Activated naive CD4-positive, alpha-beta T cell treated with anti-CD3 and anti-CD28 coated beads for 36 hours (primary cell): ENCODE measurements at regions of chr19 and their contacts with region 1.

Region 1: GRCh38 chr19:55516878-55517620 is 19.9 kb downstream of the SBK2 start:
- DNase-seq: peak; percentile 93
- H3K4me3 Mint-ChIP-seq: peak overlapping the region; percentile 59
- H3K27ac Mint-ChIP-seq: no peak overlapping the region
- H3K4me1 Mint-ChIP-seq: peaks cover 3% of the 10 kb centered on the region
- H3K27me3 Mint-ChIP-seq: peaks cover 1% of the 10 kb centered on the region

Region 2: DNA sequence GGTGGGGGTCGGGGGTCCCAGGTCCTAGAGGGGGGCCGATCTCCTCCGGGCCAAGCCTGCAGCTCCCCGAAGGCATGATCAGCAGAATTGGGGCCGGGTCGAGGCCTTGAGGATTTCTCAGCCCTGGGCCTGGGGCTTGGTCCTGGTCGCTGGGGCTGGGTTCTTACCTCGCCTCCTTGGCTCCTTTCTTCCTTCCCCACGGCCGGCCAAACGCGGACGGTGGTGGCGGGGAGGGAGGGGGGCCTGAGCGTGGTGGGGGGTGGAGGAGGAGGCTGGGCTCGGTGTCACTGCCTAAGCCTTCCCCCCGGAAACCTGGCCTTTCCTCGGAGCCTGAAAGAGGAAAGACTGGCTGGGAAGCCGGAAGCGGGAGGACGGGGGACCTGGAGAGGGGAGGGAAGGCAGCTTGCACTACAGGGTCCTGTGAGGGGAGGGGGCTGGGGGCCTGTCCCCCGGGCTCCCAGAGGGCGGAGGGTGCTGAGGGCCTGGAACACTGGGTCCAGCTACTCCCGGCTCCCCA is 63.6 kb after region 1 on chr19 and contains the start of gene ZNF579:
- CTCF ChIA-PET with region 1: no interaction called
- intact Hi-C with region 1: loop called (anchors 1 kb)
- DNase-seq: peak; percentile 89
- H3K4me3 Mint-ChIP-seq: peak within 1 kb of the TSS; percentile 76
- H3K27ac Mint-ChIP-seq: peak within 1 kb of the TSS; percentile 72
- H3K4me1 Mint-ChIP-seq: peaks cover 27% of the 10 kb centered on the region
- H3K27me3 Mint-ChIP-seq: no peaks in the 10 kb centered on the region
- total RNA-seq, gene ZNF579: 6.1 to 6.5 TPM

Region 3: DNA sequence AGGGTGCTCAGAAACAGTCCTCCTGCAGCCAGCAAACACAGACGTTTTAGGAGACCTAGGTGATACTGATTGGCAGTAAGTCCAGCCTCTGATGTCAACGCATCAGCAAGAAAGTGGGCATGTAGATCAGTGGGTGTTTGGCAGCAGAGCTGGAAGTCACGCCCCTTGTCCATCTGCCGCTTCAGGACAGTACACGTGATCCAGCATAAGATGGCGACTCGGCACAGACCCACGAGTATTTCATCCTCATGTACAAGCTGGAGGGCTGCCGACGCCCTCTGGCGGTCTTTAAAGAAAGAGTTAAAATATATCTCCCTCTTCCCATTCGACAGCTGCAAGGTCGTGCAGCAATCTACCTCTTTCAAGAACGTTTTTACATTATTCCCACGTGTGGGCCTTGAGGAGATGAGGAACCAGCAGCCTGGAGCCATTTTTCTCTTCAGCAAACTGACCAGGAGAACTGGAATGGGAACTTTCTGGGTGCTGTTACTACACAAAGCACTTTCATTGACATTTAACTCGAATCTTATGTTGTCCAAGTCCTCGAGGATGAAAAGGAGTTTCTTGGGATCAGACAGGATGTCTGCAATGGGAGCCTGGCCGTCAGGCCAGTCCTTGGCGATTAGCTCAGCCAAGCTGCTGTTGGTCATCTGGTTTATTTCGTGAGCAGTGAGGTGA is 292.5 kb after region 1 on chr19:
- CTCF ChIA-PET with region 1: interaction called, 4 read pairs
- intact Hi-C with region 1: loop called (anchors 10 kb)
- DNase-seq: peak; percentile 56
- H3K4me3 Mint-ChIP-seq: no peak overlapping the region
- H3K27ac Mint-ChIP-seq: no peak overlapping the region
- H3K4me1 Mint-ChIP-seq: peaks cover 6% of the 10 kb centered on the region
- H3K27me3 Mint-ChIP-seq: peaks cover 18% of the 10 kb centered on the region